ENCODE measurements at regions of chr17 and their contacts with region 1.

Region 1: DNA sequence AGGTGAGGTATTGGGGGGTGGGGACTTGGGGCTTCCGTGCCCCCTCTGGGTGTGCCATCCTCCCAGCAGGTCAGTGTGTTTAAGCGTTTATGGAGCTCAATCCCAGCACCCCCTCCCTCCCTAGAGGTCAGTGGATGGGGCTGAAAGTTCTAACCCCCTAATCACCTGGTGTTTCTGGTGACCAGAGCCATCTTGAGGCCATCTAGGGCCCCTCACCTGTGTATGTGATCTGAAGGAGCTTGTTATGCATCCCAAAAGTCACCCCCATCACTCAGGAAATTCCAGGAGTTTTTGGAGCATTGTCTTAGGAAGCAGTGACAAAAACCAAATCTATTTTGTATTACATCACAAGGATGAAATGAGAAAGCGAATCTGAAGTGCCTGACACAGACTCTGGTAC is 67.8 kb upstream of the NOL11 start:
- DNase-seq: no peak
- H3K4me3 ChIP-seq: no peak overlapping the region
- H3K4me3 Mint-ChIP-seq: no peak overlapping the region
- H3K27ac Mint-ChIP-seq: no peak overlapping the region
- H3K4me1 ChIP-seq: no peaks in the 10 kb centered on the region
- H3K4me1 Mint-ChIP-seq: no peaks in the 10 kb centered on the region
- H3K27me3 ChIP-seq: no peaks in the 10 kb centered on the region
- H3K27me3 Mint-ChIP-seq: no peaks in the 10 kb centered on the region
- CTCF ChIP-seq: no peak

Region 2: DNA sequence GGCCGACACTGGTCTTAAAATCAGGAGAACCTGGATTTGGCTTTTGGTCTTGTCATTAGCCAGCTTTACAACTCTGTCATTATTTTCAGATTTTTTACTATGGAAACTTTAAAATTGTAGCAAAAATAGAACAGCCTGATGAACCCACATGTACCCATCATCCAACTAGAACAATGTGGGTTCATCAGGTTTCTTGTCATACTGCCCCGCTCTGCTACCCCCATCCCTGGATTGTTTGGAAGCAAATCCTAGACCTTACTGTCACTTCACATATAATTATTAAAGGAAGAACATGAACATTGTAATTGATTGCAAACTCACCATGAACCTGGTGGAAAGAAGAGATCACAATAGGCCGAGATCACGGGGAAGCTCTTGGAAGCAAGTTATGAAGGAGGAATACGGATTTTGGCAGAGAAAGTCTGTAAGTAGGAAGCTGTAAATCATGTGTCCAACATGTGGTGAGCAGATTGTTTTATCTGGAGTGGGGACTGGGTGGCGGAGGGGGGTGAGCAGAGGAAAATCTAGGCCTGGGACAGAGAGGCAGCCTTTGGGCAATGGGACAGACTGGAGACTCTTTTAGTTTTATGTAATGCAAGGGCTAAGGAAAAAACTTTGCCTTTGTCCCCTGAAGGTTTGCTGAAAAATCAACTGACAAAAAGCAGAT is 205.8 kb before region 1 on chr17:
- CTCF ChIA-PET with region 1: interaction called, 10 read pairs
- POLR2A ChIA-PET with region 1: no interaction called
- intact Hi-C with region 1: no loop called
- DNase-seq: no peak
- H3K4me3 ChIP-seq: no peak overlapping the region
- H3K4me3 Mint-ChIP-seq: no peak overlapping the region
- H3K27ac Mint-ChIP-seq: no peak overlapping the region
- H3K4me1 ChIP-seq: no peaks in the 10 kb centered on the region
- H3K4me1 Mint-ChIP-seq: no peaks in the 10 kb centered on the region
- H3K27me3 ChIP-seq: no peaks in the 10 kb centered on the region
- H3K27me3 Mint-ChIP-seq: peaks cover 3% of the 10 kb centered on the region
- CTCF ChIP-seq: no peak

Region 3: GRCh38 chr17:67584991-67585602 is 64.8 kb before region 1 on chr17:
- CTCF ChIA-PET with region 1: no interaction called
- POLR2A ChIA-PET with region 1: no interaction called
- intact Hi-C with region 1: no loop called
- DNase-seq: peak; percentile 73 to 75
- H3K4me3 ChIP-seq: no peak overlapping the region
- H3K4me3 Mint-ChIP-seq: no peak overlapping the region
- H3K27ac Mint-ChIP-seq: peak overlapping the region; percentile 71
- H3K4me1 ChIP-seq: peaks cover 14% of the 10 kb centered on the region
- H3K4me1 Mint-ChIP-seq: peaks cover 14% of the 10 kb centered on the region
- H3K27me3 ChIP-seq: no peaks in the 10 kb centered on the region
- H3K27me3 Mint-ChIP-seq: no peaks in the 10 kb centered on the region
- CTCF ChIP-seq: no peak

Measured in Caco-2 (cell line).